WTC11 (cell line): ENCODE measurements at regions of chr12 and their contacts with region 1.

Region 1: GRCh38 chr12:56104109-56104814 is at the start of gene PA2G4:
- DNase-seq: peak; percentile 98
- ATAC-seq: peak; percentile 98
- H3K4me3 Mint-ChIP-seq: peak within 1 kb of the TSS; percentile 90
- H3K27ac Mint-ChIP-seq: peak within 1 kb of the TSS; percentile 99
- H3K4me1 Mint-ChIP-seq: peaks cover 24% of the 10 kb centered on the region
- H3K27me3 Mint-ChIP-seq: no peaks in the 10 kb centered on the region
- CTCF ChIP-seq: no peak
- total RNA-seq, gene PA2G4: 198 to 249 TPM (median 199 TPM) in 3 replicates

Region 2: DNA sequence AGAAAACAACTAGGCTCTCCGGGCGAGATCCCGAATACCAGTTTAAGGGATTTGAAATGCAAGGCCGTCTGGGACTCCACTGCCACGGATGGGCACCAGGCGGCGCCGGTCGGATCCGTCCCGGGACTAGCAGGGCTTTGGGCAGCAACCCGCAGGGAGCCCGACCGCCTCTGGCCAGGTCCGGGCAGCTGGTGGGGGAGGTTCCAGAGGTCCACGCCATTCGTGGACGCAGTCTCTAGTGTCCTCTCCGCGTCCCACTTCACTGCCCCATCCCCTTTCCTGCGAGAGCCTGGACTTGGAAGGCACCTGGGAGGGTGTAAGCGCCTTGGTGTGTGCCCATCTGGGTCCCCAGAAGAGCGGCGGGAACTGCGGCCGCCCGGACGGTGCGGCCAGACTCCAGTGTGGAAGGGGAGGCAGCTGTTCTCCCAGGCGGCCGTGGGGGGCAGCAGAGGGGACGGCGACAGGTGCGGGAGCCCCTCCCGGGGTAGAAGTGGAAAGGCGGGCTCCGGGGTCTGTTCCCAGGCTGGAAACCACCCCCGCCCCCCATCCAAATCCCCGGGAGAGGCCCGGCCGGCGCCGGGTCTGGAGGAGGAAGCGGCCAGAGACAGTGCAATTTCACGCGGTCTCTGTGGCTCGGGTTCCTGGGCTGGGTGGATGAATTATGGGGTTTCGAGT is 25.1 kb before region 1 on chr12:
- CTCF ChIA-PET with region 1: interaction called, 16 read pairs
- POLR2A ChIA-PET with region 1: interaction called, 34 read pairs
- DNase-seq: peak; percentile 96
- ATAC-seq: peak; percentile 68
- H3K4me3 Mint-ChIP-seq: peak overlapping the region; percentile 89
- H3K27ac Mint-ChIP-seq: peak overlapping the region; percentile 98
- H3K4me1 Mint-ChIP-seq: peaks cover 23% of the 10 kb centered on the region
- H3K27me3 Mint-ChIP-seq: no peaks in the 10 kb centered on the region
- CTCF ChIP-seq: peak; percentile 46; the same call in 1 of the 2 replicates

Region 3: GRCh38 chr12:56084958-56085543 is 19.2 kb before region 1 on chr12:
- CTCF ChIA-PET with region 1: interaction called, 36 read pairs
- POLR2A ChIA-PET with region 1: interaction called, 34 read pairs
- DNase-seq: peak; percentile 74
- ATAC-seq: peak; percentile 50
- H3K4me3 Mint-ChIP-seq: no peak overlapping the region
- H3K27ac Mint-ChIP-seq: no peak overlapping the region; the same call in 1 of the 2 replicates
- H3K4me1 Mint-ChIP-seq: peaks cover 15% of the 10 kb centered on the region
- H3K27me3 Mint-ChIP-seq: no peaks in the 10 kb centered on the region
- CTCF ChIP-seq: peak; percentile 40; the same call in 1 of the 2 replicates

Region 4: DNA sequence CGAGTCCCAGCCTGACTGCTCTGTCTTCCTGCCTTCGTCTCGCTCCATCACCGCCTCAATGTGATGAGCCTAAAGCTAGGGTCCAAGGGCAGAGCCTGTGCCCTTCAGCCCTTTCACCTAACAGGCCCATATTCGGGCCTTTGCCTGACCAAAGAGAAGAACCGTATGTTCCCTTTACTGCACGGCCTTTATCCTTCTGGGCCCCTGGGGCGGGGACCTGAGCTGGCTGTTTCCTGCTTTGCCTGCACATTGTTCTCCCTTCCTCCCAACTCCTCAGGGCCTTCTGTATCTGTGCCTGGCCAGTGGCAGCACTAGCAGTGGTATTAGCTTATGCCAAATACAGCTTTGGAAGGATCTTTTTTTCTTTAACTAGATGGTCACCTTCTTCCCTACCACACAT is 39.6 kb after region 1 on chr12:
- CTCF ChIA-PET with region 1: no interaction called
- POLR2A ChIA-PET with region 1: no interaction called
- DNase-seq: no peak
- ATAC-seq: no peak
- H3K4me3 Mint-ChIP-seq: no peak overlapping the region
- H3K27ac Mint-ChIP-seq: no peak overlapping the region
- H3K4me1 Mint-ChIP-seq: no peaks in the 10 kb centered on the region
- H3K27me3 Mint-ChIP-seq: no peaks in the 10 kb centered on the region
- CTCF ChIP-seq: no peak

Region 5: DNA sequence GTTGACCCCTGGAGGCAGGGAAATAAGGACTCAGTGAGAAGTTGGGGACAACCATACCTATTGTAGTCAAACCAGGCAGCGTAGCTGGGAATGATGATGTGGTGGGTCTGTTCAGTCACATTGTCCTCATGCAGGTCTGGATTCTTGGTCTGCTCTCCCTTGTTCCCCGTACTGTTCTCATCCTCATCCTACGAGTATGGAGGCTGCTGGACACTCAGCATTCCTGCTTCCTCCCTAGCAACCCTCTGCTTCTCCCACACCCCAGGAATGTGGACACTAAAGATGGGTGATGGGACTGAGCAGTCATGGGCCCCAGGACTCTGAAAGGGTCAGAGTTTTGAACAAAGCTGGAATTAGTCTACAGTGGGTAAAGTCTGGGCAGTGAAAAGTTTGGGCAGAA is 74.1 kb after region 1 on chr12:
- CTCF ChIA-PET with region 1: no interaction called
- POLR2A ChIA-PET with region 1: no interaction called
- DNase-seq: no peak
- ATAC-seq: no peak
- H3K4me3 Mint-ChIP-seq: no peak overlapping the region
- H3K27ac Mint-ChIP-seq: no peak overlapping the region
- H3K4me1 Mint-ChIP-seq: no peaks in the 10 kb centered on the region
- H3K27me3 Mint-ChIP-seq: no peaks in the 10 kb centered on the region
- CTCF ChIP-seq: no peak

Region 6: DNA sequence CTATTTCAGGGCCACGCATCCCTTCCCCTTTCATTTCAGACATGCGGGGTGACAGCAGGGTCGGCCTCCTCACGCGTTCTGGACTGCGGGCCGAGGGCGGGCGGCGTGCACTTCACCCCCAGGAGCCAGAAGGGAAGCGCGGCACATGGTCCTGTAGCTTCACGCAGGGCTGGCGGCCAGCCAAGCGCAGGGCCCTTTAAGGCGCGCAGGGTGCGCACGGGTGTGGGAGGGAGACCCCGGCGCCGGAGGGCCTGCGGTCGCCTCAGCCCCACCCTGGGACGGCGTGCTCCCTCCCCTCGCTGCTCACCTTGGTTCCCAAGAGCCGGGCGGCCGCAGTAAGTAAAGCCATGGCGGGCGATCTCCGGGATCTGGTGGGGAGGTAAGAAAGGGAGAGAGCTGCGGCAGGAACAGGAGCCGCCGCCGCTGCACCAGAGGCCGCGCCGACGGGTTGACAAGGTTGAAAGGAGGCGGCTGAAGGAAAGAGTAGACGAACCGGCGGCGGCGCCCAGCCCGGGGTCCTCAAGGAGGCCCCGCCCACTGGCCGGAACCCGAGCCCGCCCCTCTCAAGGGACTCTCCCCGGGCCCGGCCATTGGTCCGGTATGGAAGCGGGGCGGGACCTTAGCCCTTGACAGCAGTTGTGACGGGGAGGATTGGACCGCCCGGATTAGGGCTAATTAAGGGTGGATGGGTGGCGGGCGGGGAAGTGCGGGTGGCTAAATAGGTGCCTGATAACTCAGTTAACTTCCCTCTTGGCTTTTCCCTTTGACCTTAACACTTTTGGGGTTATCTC is 195.8 kb after region 1 on chr12 and contains the start of gene CS:
- CTCF ChIA-PET with region 1: no interaction called
- POLR2A ChIA-PET with region 1: no interaction called
- DNase-seq: peak; percentile 99
- ATAC-seq: peak; percentile 98
- H3K4me3 Mint-ChIP-seq: peak within 1 kb of the TSS; percentile 92
- H3K27ac Mint-ChIP-seq: peak within 1 kb of the TSS; percentile 99
- H3K4me1 Mint-ChIP-seq: peaks cover 26% of the 10 kb centered on the region
- H3K27me3 Mint-ChIP-seq: no peaks in the 10 kb centered on the region
- CTCF ChIP-seq: no peak
- total RNA-seq, gene CS: 241 to 275 TPM (median 246 TPM) in 3 replicates